Heart right ventricle (tissue), 16 donors: ENCODE measurements at regions of chr12 and their contacts with region 1.

Region 1: DNA sequence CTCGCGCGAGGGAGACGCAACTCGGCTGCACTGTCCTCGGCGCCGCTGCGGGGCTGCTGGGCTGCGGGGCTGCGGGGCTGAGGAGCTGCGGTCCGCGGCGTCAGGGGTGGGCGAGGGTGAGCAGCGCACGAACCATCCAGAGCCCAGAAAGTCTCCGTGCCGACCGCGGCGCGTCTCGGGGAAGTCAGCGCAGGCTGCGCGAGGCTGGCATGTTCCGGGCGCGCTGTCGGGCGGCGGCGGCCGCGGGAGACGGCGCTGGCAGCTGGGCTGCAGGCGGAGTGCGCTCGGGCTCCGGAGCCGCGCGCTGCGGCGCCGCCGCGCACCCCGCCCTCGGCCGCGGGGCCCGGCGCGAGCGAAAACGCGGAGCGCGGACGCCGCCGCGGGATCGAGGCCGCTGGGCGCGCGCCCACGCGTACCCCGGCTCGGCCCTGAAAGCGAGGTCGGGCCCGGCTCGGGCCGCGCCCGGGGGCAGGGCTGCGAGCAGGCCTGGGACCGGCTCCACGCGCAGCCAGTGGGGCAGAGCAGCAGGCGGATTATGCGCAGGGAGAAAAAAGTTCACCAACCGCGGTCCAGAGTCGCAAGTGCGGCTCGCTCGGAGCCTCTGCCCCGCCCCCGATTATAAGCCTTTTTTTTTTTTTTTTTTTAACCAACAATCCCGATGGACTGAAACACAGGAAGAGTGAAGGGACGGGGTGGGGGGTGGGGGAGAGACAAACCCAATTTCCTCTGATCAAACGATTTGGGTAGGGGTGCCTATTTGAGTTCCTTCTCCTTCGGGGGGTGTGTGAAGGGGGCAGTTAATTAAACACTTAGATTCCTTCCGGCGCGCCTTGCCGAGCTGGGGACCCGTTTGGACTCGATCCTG is at the start of gene PRICKLE1:
- DNase-seq: peak; percentile 38 to 54
- ATAC-seq: peak; percentile 48 to 90 (median 74)
- H3K4me3 ChIP-seq: peak within 1 kb of the TSS; percentile 68 to 99 (median 96)
- H3K27ac ChIP-seq: peak within 1 kb of the TSS; percentile 68 to 94 (median 83)
- H3K4me1 ChIP-seq: peaks cover 0 to 52% (median 39%) of the 10 kb centered on the region in 9 donors
- H3K27me3 ChIP-seq: peaks cover 0 to 49% (median 0%) of the 10 kb centered on the region in 7 donors
- CTCF ChIP-seq: no peak
- total RNA-seq, gene PRICKLE1: 12.9 to 36.9 (median 18.4) TPM

Region 2: DNA sequence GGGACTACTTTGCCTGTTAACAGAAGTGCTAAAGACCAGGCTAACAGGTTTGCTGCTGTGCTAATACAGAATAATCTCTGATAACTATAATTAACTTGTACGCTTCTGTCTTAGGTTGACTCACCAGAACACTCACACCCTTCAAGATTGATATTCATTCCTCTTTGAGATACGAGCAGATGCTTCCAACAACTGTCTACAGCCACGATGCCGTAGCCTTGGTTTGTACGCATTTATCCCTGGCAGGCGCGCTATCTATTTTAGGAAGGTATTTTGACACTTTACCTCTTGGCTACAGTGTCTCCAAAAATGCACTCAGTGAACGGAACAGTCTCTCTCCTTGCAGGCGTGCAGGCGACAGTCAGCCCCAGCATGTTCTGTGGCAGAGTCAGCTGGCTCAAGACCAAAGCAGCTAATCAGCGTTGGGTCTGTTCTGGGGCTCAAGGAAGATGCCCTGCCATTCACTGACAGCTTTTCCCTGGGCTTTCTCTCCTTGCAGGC is 146.2 kb after region 1 on chr12:
- intact Hi-C with region 1: loop called in 3 of 10 experiments (anchors 5 to 10 kb)
- DNase-seq: peak; percentile 55 to 73
- ATAC-seq: peak; percentile 85 to 97 (median 94)
- H3K4me3 ChIP-seq: peak overlapping the region in 6 of 10 donors; percentile 11 to 36 (median 24)
- H3K27ac ChIP-seq: peak overlapping the region; percentile 2 to 84 (median 76)
- H3K4me1 ChIP-seq: peaks cover 0 to 41% (median 10%) of the 10 kb centered on the region in 9 donors
- H3K27me3 ChIP-seq: no peaks in the 10 kb centered on the region
- CTCF ChIP-seq: no peak

Region 3: GRCh38 chr12:42790761-42791151 is 201.1 kb after region 1 on chr12:
- intact Hi-C with region 1: loop called in 1 of 10 experiments (anchors 10 kb)
- DNase-seq: no peak
- ATAC-seq: peak in 4 of 8 donors; percentile 27 to 47 (median 36)
- H3K4me3 ChIP-seq: no peak overlapping the region
- H3K27ac ChIP-seq: peak overlapping the region in 2 of 10 donors; percentile 37 to 41
- H3K4me1 ChIP-seq: peaks cover 0 to 18% (median 8%) of the 10 kb centered on the region in 9 donors
- H3K27me3 ChIP-seq: no peaks in the 10 kb centered on the region
- CTCF ChIP-seq: no peak

Region 4: DNA sequence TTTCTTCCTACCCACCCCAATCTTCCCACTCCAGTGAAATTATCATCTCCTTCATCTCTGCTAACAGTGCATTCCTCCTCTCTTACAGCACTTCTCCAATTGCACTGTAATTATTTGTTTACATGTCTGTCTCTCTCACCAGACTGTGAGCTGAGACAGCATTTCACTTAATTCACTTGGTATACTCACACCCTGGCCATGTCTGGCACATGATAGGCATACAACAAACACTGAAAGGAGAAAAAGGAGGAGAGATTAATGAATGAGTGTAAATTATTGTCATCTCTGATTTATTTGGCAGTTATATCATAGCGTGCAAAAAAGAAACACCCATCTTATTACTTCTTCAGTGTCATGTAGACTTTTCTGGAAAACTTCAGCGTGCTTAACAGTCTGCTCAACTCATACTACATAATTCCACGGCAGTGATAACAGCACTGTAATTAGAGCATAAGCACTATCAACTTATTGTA is 510.0 kb after region 1 on chr12:
- intact Hi-C with region 1: loop called in 1 of 10 experiments (anchors 10 kb)
- DNase-seq: no peak
- ATAC-seq: no peak
- H3K4me3 ChIP-seq: no peak overlapping the region
- H3K27ac ChIP-seq: no peak overlapping the region
- H3K4me1 ChIP-seq: peaks cover 0 to 9% (median 0%) of the 10 kb centered on the region in 9 donors
- H3K27me3 ChIP-seq: no peaks in the 10 kb centered on the region
- CTCF ChIP-seq: no peak

Region 5: GRCh38 chr12:43338848-43339526 is 749.3 kb after region 1 on chr12:
- intact Hi-C with region 1: loop called in 7 of 10 experiments (anchors 2 to 10 kb)
- DNase-seq: peak in 1 of 2 donors; percentile 31
- ATAC-seq: peak; percentile 93 to 100 (median 96)
- H3K4me3 ChIP-seq: no peak overlapping the region
- H3K27ac ChIP-seq: peak overlapping the region in 6 of 10 donors; percentile 28 to 71 (median 48)
- H3K4me1 ChIP-seq: peaks cover 0 to 19% (median 16%) of the 10 kb centered on the region in 9 donors
- H3K27me3 ChIP-seq: no peaks in the 10 kb centered on the region
- CTCF ChIP-seq: peak; percentile 22 to 87 (median 70)